Mammary epithelial cell (primary cell): ENCODE measurements at regions of chr12 and their contacts with region 1.

Region 1: GRCh38 chr12:5535541-5535940 is 103.6 kb downstream of the NTF3 start:
- DNase-seq: no peak
- H3K4me3 ChIP-seq: no peak overlapping the region
- H3K27ac ChIP-seq: no peak overlapping the region
- H3K4me1 ChIP-seq: no peaks in the 10 kb centered on the region
- H3K27me3 ChIP-seq: no peaks in the 10 kb centered on the region
- CTCF ChIP-seq: no peak

Region 2: DNA sequence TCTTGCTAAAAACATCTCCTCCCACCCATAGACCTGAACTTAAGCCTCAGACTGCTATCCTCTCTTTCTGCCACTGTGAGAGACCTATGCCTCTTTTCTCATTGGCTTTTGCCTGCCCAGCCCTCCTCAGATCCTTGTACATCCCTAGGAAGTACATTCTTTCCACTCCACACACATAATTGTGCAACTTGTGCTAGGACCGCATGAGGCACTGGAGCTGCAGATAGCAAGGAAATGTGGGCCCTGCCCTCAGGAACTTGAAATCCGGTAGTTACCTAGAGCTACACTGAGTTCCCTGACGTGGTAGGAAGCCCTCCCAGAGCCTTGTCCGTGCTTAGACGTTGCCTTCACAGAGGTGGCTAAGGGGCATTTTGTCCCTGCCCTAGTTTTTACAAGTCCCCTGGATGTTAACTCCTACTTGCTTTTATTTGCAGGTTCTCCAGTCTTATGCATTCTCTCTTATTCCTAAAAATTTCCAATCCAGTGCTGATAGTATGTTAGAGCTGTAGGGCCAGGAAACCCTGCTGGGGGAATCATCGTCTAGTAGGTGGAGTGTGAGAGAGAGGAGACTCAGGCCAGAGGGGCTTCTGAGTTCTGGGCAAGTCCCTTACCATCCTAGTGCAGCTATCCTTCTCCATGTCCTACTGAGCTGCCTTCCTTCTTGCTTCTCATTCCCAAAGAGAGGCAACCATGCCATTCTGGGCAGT is 62.3 kb before region 1 on chr12:
- CTCF ChIA-PET with region 1: no interaction called
- dilution Hi-C with region 1: loop called (anchors 10 kb)
- in situ Hi-C with region 1: no loop called
- intact Hi-C with region 1: no loop called
- DNase-seq: no peak
- H3K4me3 ChIP-seq: no peak overlapping the region
- H3K27ac ChIP-seq: no peak overlapping the region
- H3K4me1 ChIP-seq: no peaks in the 10 kb centered on the region
- H3K27me3 ChIP-seq: peaks cover 1% of the 10 kb centered on the region
- CTCF ChIP-seq: no peak

Region 3: DNA sequence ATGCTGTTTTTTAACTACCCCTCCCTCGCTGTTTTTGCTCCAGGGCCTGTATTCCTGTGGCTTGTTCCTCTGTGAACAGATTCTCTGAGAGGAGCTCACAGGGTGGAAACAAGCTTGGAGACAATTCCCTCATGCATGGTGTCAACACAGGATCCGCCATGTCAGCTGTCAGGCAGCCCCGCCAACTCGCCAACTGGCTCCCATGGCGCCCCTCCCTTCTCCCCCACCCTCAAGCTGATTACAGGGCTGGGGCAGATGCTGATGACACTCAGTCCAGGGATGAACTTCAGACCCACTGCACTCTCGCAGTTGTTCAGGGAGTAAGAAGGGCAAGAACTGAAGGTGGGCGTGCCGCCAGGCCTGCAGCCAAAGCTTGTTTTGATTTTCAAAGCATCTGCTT is 126.3 kb after region 1 on chr12:
- CTCF ChIA-PET with region 1: no interaction called
- dilution Hi-C with region 1: no loop called
- in situ Hi-C with region 1: no loop called
- intact Hi-C with region 1: no loop called
- DNase-seq: no peak
- H3K4me3 ChIP-seq: no peak overlapping the region
- H3K27ac ChIP-seq: no peak overlapping the region
- H3K4me1 ChIP-seq: no peaks in the 10 kb centered on the region
- H3K27me3 ChIP-seq: no peaks in the 10 kb centered on the region
- CTCF ChIP-seq: no peak